Activated T-helper 2 cell treated with anti-CD3 and anti-CD28 coated beads, Interferon-gamma antibody, Interleukin-2, Interleukin-4, amounts not matched to agents 10 μg/mL and 5 μg/mL and 100 μg/mL, durations not matched to agents 14 hours and 24 hours and 36 hours (primary cell): ENCODE measurements at regions of chr10 and their contacts with region 1.

Region 1: GRCh38 chr10:22666287-22667092 is 47.9 kb downstream of the PIP4K2A start:
- DNase-seq: peak; percentile 51
- H3K4me3 Mint-ChIP-seq: peak overlapping the region; percentile 74
- H3K27ac Mint-ChIP-seq: peak overlapping the region; percentile 82
- H3K4me1 Mint-ChIP-seq: peaks cover 56% of the 10 kb centered on the region
- H3K27me3 Mint-ChIP-seq: no peaks in the 10 kb centered on the region

Region 2: DNA sequence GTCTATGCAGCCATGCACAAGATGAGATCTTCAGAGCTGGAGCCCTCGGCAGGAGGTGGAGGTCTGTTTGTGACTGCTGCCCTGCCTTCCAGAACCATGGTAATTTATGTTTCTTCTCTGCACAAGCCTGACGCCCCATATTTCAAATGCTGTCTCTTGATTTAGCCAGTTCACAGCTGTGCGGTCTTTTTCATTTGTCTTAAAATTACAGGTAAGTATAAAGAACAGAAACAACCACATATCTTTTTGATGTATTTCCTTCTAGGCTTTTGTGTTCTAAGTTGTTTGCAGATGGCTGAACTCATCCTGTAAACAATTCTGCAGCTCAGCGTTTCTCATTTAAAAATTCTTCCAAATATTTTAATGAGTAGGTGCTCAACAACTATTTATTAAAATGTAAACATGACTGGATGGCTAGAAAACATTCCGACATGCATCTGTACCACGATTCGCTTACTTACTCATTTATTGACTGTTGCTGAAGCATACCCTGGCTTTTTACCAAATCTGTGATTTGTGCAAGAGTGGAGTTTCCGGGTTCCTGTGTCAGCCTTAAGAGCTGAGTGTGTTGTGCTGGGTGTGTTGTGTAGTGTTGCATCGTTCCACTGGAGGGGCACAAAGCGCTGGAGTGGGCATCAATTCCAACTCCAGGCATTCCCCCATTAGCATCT is 11.0 kb before region 1 on chr10:
- intact Hi-C with region 1: loop called (anchors 1 kb)
- DNase-seq: no peak
- H3K4me3 Mint-ChIP-seq: peak overlapping the region; percentile 49
- H3K27ac Mint-ChIP-seq: peak overlapping the region; percentile 85
- H3K4me1 Mint-ChIP-seq: peaks cover 83% of the 10 kb centered on the region
- H3K27me3 Mint-ChIP-seq: no peaks in the 10 kb centered on the region

Region 3: DNA sequence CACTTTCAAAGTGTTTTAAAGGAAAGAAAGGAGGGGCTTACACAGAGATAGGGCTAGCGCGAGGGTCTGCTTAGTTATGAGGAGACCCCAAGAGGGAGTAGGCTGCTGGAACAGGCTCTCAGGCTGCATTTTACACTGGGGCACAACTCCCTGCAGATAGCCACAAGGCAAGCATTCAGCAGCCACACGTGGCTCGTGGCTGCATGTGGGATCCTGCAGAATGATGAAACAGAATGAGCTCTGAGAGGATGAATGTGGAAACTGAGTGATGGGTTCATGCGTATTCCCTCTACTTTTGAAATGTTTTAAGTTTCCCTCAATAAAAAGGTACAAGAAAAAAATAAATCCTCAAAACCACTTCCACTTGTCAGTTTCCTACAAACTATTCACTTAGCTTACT is 10.8 kb after region 1 on chr10:
- intact Hi-C with region 1: loop called (anchors 1 kb)
- DNase-seq: no peak
- H3K4me3 Mint-ChIP-seq: no peak overlapping the region
- H3K27ac Mint-ChIP-seq: peak overlapping the region; percentile 0
- H3K4me1 Mint-ChIP-seq: peaks cover 74% of the 10 kb centered on the region
- H3K27me3 Mint-ChIP-seq: no peaks in the 10 kb centered on the region